Cardiac septum (tissue), 1 donor: ENCODE measurements at regions of chr20 and their contacts with region 1.

Region 1: DNA sequence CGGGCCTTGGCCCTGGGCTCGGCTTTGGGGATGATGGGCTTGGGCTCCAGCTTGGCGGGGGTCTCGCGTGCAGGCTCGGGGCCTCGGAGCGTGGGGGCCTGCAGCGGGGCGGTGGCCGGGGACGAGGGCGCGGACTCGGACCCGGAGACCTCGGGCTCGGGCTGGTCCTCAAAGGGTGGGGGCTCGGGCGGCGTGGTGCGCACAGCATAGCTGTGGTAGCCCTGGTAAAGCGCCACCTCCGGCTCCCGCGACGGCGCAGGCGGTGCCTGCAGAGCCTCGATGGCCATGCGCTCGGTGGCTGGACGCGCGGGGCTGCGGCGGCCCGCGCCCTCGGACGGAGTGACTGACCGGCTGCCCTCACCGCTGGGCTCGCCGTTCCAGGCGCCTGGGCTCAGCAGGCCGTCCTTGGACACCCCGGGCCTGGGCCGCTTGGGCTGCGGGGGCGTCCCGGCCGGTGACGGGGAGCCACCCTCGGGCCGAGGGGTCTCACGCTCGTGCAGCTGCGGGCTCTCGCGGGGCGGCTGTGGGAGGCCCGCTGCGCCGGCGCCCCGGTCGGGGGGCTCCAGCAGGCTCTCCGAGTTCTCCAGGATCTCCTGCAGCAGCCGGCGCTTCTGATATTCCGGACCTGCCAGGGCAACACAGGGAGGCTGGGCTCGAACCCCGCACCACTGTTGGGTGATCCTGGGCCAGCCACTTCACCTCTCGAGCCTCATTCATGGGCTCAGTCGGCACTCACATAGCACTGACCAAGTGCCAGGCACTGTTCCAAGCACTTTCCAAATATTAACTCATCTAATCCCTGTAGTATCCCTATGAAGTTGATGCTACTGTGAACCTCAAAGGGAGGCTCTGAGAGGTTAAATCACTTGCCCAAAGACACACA is 71.0 kb downstream of the JPH2 start:
- DNase-seq: no peak

Region 2: GRCh38 chr20:44310664-44311639 is 194.9 kb after region 1 on chr20 and contains the start of gene FITM2:
- intact Hi-C with region 1: loop called (anchors 5 kb)
- DNase-seq: peak; percentile 99
- total RNA-seq, gene FITM2: 94.0 TPM